ENCODE measurements at regions of chr1 and their contacts with region 1.

Region 1: DNA sequence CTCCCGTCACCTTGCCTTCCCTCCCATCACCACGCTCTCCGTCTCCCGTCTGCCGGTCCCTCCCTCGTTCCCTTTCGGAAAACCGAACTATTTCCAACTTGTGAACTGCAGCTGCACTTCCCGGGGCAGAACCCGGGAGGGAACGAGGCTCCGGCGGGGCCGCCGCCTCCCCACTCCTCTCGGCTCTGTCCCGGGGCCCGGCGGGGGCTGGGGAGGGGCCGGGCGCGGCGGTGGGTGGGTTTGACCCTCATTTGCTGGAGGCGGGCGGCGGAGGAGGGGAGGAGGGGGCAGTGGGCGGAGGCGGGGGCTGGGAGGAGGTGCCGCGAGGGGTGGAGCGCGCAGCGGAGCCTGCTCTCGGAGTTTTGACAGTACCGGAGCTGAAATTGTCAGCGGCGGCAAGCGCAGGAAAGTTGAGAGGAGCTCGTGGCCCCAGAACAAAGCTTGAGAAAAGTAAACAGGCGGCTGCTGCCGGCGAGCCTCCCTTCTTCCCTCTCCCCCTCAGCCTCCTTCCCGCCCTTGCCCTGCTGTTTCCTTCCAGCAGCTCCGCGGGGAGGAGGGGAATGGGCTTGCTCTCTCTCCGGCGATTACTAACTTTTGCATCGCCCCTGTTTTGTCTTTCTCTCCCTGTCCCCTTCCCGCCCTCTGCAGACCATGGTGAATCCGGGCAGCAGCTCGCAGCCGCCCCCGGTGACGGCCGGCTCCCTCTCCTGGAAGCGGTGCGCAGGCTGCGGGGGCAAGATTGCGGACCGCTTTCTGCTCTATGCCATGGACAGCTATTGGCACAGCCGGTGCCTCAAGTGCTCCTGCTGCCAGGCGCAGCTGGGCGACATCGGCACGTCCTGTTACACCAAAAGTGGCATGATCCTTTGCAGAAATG is 2.9 kb downstream of the LMO4 start:
- DNase-seq: no peak
- H3K4me3 ChIP-seq: peak overlapping the region; percentile 74
- CTCF ChIP-seq: peak; percentile 34

Region 2: GRCh38 chr1:87370539-87370938 is 38.9 kb after region 1 on chr1:
- in situ Hi-C with region 1: no loop called
- DNase-seq: no peak
- H3K4me3 ChIP-seq: no peak overlapping the region
- CTCF ChIP-seq: no peak

Region 3: DNA sequence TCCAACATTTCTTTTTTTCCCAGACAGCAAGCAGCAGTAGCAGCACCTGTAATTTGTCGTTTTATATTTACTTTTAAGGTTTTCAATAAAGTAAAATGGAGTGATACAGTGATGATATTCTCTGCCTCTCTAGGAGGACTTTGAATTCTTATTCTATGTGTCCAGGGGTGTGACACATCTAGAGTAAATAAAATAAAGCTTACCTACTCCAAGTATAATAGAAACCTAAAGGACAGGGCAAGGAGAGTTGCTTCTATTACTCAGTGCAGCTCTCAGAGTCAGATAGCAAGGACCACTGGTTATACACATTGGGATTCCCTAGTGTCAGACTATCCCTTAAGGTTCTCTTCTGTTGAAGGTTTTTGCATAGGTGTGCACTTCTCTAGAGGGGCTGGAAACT is 92.9 kb after region 1 on chr1:
- in situ Hi-C with region 1: loop called (anchors 5 kb)
- DNase-seq: no peak
- H3K4me3 ChIP-seq: no peak overlapping the region
- CTCF ChIP-seq: no peak

Region 4: GRCh38 chr1:87956072-87956471 is 624.5 kb after region 1 on chr1:
- in situ Hi-C with region 1: loop called (anchors 5 kb)
- DNase-seq: peak; percentile 96
- H3K4me3 ChIP-seq: no peak overlapping the region
- CTCF ChIP-seq: no peak

Measured in astrocyte of the cerebellum (primary cell).